HepG2 (cell line): ENCODE measurements at regions of chr12 and their contacts with region 1.

Region 1: DNA sequence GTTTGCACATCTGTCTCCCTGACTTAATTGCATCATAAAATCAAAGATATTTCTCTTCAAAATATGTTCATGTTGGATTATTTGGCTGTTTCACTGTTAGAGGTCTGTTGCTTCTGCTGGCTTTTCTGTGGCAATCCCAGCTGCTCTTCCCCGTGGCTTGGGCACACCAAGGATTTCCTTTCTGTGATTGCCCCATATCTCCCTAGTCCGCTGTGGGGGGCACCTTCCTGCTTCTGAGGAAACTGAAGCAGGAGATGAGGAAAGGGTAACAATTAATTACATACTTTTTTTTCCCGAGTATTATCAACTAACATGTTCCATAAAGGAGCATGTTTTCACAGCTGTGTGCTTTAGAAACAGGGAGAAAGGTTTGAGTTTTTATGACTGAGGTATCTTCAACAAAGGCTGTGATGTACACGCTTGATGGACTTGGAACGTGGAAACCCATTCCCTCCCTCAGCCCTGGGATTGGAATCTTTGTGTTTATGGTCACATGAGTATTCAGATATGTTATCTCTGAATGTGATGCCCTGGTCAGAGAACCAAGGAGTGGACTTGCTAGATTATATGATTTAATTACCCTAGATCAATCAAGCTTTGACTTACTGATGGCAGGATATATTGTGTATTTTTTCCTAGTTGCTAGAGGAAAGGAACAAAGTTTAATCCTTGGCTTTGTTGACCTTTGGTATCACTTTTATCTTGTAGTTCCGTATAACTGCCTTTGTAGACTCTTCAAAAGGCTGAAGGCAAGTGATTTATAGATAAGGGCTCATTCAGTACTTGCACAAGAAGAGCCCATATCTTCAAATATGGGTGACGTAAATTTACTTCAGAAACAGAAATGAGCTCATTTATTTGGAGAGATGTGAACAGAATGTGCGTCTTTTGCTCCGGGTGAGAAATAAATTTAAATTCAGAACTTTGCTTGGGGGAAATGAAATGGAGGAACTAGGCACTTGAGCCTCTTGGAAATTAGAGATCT is 46.7 kb downstream of the BORCS5 start:
- DNase-seq: peak; percentile 97
- ATAC-seq: peak; percentile 92
- H3K4me3 ChIP-seq: peak overlapping the region in 1 of 3 experiments; percentile 13; a peak in 2 of 6 replicates
- H3K27ac ChIP-seq: peak overlapping the region; percentile 96
- H3K4me1 ChIP-seq: peaks cover 83% of the 10 kb centered on the region
- H3K27me3 ChIP-seq: no peaks in the 10 kb centered on the region
- CTCF ChIP-seq: no peak
- EP300 ChIP-seq: peak; percentile 86 to 98; a peak in 3 of 4 replicates
- POLR2A ChIP-seq: no peak; a peak in 1 of 4 replicates
- RAD21 ChIP-seq: peak; percentile 15; the same call in 1 of the 2 replicates

Region 2: GRCh38 chr12:11684393-11684792 is 719.2 kb before region 1 on chr12:
- CTCF ChIA-PET with region 1: no interaction called
- POLR2A ChIA-PET with region 1: no interaction called
- in situ Hi-C with region 1: no loop called
- intact Hi-C with region 1: no loop called
- DNase-seq: no peak
- ATAC-seq: no peak
- H3K4me3 ChIP-seq: no peak overlapping the region
- H3K27ac ChIP-seq: no peak overlapping the region
- H3K4me1 ChIP-seq: peaks cover 27% of the 10 kb centered on the region
- H3K27me3 ChIP-seq: no peaks in the 10 kb centered on the region
- CTCF ChIP-seq: no peak
- EP300 ChIP-seq: no peak
- POLR2A ChIP-seq: no peak
- RAD21 ChIP-seq: no peak

Region 3: GRCh38 chr12:12356886-12357718 is 46.5 kb before region 1 on chr12 and contains the start of gene BORCS5:
- CTCF ChIA-PET with region 1: no interaction called
- POLR2A ChIA-PET with region 1: interaction called, 10 read pairs
- in situ Hi-C with region 1: no loop called
- intact Hi-C with region 1: no loop called
- DNase-seq: peak; percentile 89
- ATAC-seq: peak; percentile 96
- H3K4me3 ChIP-seq: peak within 1 kb of the TSS; percentile 83 to 93 (median 83)
- H3K27ac ChIP-seq: peak within 1 kb of the TSS; percentile 84
- H3K4me1 ChIP-seq: peaks cover 47% of the 10 kb centered on the region
- H3K27me3 ChIP-seq: no peaks in the 10 kb centered on the region
- CTCF ChIP-seq: peak; percentile 77
- EP300 ChIP-seq: no peak
- POLR2A ChIP-seq: peak; percentile 96 to 97
- RAD21 ChIP-seq: peak; percentile 54
- total RNA-seq, gene BORCS5: 3.9 and 8.2 TPM in 2 replicates

Region 4: DNA sequence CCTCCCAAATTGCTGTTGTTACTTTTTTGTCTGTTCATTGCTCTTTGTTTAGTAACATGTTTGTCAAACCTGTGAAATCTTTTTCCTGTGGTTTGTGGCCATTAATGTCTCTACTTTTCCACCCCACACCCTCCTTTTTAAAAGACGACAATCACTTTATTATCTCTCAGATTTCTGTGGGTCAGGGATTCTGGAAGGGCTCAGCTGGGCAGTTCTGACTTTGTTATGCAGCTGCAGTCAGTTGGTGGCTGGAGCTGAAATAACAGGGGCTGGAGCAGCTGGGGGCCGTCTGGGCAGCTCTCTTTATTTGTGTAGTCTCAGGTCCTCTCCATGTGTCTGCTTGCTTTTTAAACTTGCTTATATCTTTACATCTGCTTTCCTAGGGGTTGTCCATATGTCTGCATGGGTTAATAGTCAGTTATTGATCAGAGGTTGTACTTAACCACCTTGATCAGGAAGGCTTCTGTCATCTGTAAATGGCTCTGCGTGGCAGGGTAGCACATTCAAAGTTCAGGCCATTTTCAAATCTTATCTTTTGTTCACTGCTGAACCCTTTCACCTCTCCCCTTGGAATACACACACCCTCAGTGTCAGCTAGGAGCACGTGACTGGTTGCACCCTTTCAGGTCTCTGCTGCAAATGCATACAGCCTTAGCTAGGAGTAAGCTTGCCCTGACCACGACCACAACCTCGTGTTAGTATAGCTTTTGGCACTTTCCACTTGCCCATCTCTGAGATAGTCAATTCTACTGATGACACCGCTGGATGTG is 18.8 kb before region 1 on chr12:
- CTCF ChIA-PET with region 1: no interaction called
- POLR2A ChIA-PET with region 1: interaction called, 28 read pairs
- in situ Hi-C with region 1: no loop called
- intact Hi-C with region 1: no loop called
- DNase-seq: peak; percentile 88
- ATAC-seq: peak; percentile 94
- H3K4me3 ChIP-seq: peak overlapping the region in 2 of 3 experiments; percentile 20 to 24; a peak in 2 of 6 replicates
- H3K27ac ChIP-seq: peak overlapping the region; percentile 86
- H3K4me1 ChIP-seq: peaks cover 85% of the 10 kb centered on the region
- H3K27me3 ChIP-seq: no peaks in the 10 kb centered on the region
- CTCF ChIP-seq: no peak
- EP300 ChIP-seq: peak in 1 of 2 experiments; percentile 50; a peak in 2 of 4 replicates
- POLR2A ChIP-seq: peak in 1 of 2 experiments; percentile 25; a peak in 1 of 4 replicates
- RAD21 ChIP-seq: no peak

Region 5: DNA sequence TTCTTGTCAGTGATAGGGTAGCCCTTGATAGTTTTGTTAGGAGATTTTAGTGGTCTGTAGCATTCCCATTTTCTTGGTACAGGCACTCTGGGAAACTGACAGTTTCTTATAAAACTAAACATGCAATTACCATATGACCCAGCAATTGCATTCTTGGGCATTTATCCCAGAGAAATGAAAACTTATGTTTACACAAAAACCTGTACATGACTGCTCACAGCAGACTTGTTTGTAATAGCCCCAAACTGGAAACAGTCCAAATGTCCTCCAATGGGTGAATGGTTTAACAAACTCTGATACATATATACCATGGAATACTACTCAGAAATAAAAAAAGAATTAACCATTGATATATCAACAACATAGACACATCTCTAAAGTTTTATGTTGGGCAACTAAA is 28.8 kb after region 1 on chr12:
- CTCF ChIA-PET with region 1: no interaction called
- POLR2A ChIA-PET with region 1: interaction called, 4 read pairs
- in situ Hi-C with region 1: no loop called
- intact Hi-C with region 1: loop called (anchors 2 kb)
- DNase-seq: no peak
- ATAC-seq: no peak
- H3K4me3 ChIP-seq: no peak overlapping the region
- H3K27ac ChIP-seq: no peak overlapping the region
- H3K4me1 ChIP-seq: peaks cover 67% of the 10 kb centered on the region
- H3K27me3 ChIP-seq: no peaks in the 10 kb centered on the region
- CTCF ChIP-seq: no peak
- EP300 ChIP-seq: no peak
- POLR2A ChIP-seq: no peak
- RAD21 ChIP-seq: no peak